Caco-2 (cell line): ENCODE measurements at regions of chr1 and their contacts with region 1.

Region 1: DNA sequence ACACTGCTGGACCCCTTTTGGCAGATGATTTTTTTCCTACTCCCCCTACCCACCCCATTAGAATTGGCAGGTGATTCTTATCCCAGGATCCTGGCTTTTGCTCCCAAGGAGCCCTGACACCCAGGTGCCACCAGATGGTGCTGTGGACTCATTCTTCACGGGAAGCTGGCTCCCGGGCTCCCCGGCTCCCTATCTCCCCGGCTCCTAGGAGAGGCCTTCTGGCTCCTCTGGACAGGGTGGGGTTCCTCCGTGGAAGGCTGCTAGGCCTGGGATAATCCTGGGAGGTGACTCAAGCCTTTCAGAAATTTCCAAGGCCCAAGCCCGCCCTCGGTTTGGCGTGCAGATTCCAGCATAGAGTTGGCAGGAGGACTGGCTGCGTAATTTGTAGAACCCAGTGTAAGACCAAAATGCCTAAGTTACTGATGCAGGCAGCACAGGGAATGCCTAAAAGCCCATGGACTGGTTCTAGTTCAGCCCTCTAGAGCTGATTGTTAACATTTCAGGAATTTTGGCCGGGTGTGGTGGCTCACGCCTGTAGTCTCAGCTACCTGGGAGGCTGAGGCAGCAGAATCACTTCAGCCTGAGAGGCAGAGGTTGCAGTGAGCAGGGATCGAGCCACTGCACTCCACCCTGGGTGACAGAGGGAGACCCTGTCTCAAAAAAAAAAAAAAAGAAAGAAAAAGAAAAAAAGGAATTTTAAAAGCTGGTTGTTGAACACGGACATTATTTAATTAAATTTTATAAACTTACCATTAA is 6.8 kb upstream of the BSDC1 start:
- DNase-seq: peak; percentile 78 to 80
- H3K4me3 ChIP-seq: no peak overlapping the region
- H3K4me3 Mint-ChIP-seq: no peak overlapping the region
- H3K27ac Mint-ChIP-seq: no peak overlapping the region
- H3K4me1 ChIP-seq: no peaks in the 10 kb centered on the region
- H3K4me1 Mint-ChIP-seq: no peaks in the 10 kb centered on the region
- H3K27me3 ChIP-seq: no peaks in the 10 kb centered on the region
- H3K27me3 Mint-ChIP-seq: no peaks in the 10 kb centered on the region
- CTCF ChIP-seq: peak; percentile 67 to 84

Region 2: GRCh38 chr1:32221980-32222755 is 178.9 kb before region 1 on chr1 and contains the starts of genes EIF3I and TMEM234:
- CTCF ChIA-PET with region 1: no interaction called
- POLR2A ChIA-PET with region 1: no interaction called
- intact Hi-C with region 1: no loop called
- DNase-seq: peak; percentile 84 to 88
- H3K4me3 ChIP-seq: peak within 1 kb of the TSS; percentile 73
- H3K4me3 Mint-ChIP-seq: peak within 1 kb of the TSS; percentile 89
- H3K27ac Mint-ChIP-seq: peak within 1 kb of the TSS; percentile 95
- H3K4me1 ChIP-seq: no peaks in the 10 kb centered on the region
- H3K4me1 Mint-ChIP-seq: no peaks in the 10 kb centered on the region
- H3K27me3 ChIP-seq: no peaks in the 10 kb centered on the region
- H3K27me3 Mint-ChIP-seq: no peaks in the 10 kb centered on the region
- CTCF ChIP-seq: no peak
- total RNA-seq, gene EIF3I: 128 and 153 TPM in 2 replicates
- total RNA-seq, gene TMEM234: 11.5 and 12.0 TPM in 2 replicates

Region 3: DNA sequence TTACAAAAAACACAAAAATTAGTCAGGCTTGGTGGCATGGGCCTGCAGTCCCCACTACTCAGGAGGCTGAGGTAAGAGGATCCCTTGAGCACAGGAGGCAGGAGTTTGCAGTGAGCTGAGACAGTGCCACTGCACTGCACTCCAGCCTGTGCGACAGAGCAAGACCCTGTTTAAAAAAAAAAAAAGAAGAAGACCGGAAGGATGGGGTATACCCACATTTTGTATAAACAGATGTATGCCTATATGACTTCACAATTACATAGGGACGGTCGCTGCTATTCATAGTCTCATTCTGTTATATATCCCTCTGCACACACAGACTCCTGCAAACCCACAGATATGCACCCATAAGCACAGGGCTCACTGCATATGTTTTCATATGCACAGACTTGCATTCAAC is 137.3 kb before region 1 on chr1:
- CTCF ChIA-PET with region 1: no interaction called
- POLR2A ChIA-PET with region 1: no interaction called
- intact Hi-C with region 1: no loop called
- DNase-seq: no peak
- H3K4me3 ChIP-seq: no peak overlapping the region
- H3K4me3 Mint-ChIP-seq: no peak overlapping the region
- H3K27ac Mint-ChIP-seq: no peak overlapping the region
- H3K4me1 ChIP-seq: peaks cover 4% of the 10 kb centered on the region; the same call in 1 of the 2 replicates
- H3K4me1 Mint-ChIP-seq: peaks cover 7% of the 10 kb centered on the region
- H3K27me3 ChIP-seq: no peaks in the 10 kb centered on the region
- H3K27me3 Mint-ChIP-seq: no peaks in the 10 kb centered on the region
- CTCF ChIP-seq: no peak

Region 4: GRCh38 chr1:32413507-32414185 is 12.6 kb after region 1 on chr1:
- CTCF ChIA-PET with region 1: interaction called, 3 read pairs
- POLR2A ChIA-PET with region 1: no interaction called
- intact Hi-C with region 1: loop called (anchors 1 kb)
- DNase-seq: peak; percentile 45 to 57
- H3K4me3 ChIP-seq: no peak overlapping the region
- H3K4me3 Mint-ChIP-seq: no peak overlapping the region
- H3K27ac Mint-ChIP-seq: no peak overlapping the region
- H3K4me1 ChIP-seq: no peaks in the 10 kb centered on the region
- H3K4me1 Mint-ChIP-seq: no peaks in the 10 kb centered on the region
- H3K27me3 ChIP-seq: no peaks in the 10 kb centered on the region
- H3K27me3 Mint-ChIP-seq: no peaks in the 10 kb centered on the region
- CTCF ChIP-seq: peak; percentile 32 to 41

Region 5: GRCh38 chr1:32448773-32449456 is 47.9 kb after region 1 on chr1:
- CTCF ChIA-PET with region 1: no interaction called
- POLR2A ChIA-PET with region 1: interaction called, 7 read pairs
- intact Hi-C with region 1: loop called (anchors 2 kb)
- DNase-seq: peak; percentile 38 to 51
- H3K4me3 ChIP-seq: no peak overlapping the region
- H3K4me3 Mint-ChIP-seq: no peak overlapping the region
- H3K27ac Mint-ChIP-seq: no peak overlapping the region
- H3K4me1 ChIP-seq: no peaks in the 10 kb centered on the region
- H3K4me1 Mint-ChIP-seq: peaks cover 5% of the 10 kb centered on the region
- H3K27me3 ChIP-seq: no peaks in the 10 kb centered on the region
- H3K27me3 Mint-ChIP-seq: peaks cover 5% of the 10 kb centered on the region
- CTCF ChIP-seq: no peak

Region 6: DNA sequence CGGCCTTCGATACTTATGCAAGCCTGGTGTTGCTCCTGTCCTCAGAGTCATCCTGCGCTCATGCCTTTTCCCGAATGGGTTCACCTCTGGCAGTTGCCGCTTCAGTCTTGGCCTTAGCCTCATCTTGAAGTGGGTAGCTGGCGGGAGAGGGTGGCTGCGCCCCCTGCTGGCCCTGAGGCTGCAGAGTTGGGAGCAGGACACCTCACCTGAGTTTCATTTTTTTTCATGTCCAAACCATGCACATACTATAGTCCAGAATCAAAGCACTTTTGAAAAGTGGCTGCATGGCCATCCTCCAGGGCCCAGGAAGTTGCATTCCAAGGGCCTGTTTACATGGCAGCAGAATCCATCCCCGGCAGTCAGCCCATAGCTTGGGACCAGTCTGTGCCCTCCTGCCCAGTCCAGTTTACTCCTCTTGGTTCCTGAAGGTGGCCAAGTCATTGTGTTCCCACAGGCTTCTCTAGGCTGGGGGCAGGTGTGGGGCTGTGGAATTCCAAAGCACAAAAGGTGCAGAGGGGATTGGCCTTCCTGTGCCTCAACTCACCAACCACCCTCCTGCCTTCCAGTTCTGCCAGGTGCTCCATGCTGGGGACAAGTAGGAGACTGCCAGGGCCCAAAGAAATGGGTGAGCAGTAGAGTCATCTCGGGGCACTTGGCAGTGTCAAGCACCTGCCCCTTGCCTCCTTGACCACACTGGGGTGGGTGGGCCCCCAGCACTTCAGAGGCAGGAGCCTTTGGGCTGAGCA is 372.1 kb after region 1 on chr1:
- CTCF ChIA-PET with region 1: no interaction called
- POLR2A ChIA-PET with region 1: no interaction called
- intact Hi-C with region 1: loop called (anchors 10 kb)
- DNase-seq: peak; percentile 82 to 86
- H3K4me3 ChIP-seq: no peak overlapping the region
- H3K4me3 Mint-ChIP-seq: peak overlapping the region; percentile 35
- H3K27ac Mint-ChIP-seq: peak overlapping the region; percentile 73
- H3K4me1 ChIP-seq: peaks cover 6% of the 10 kb centered on the region; the same call in 1 of the 2 replicates
- H3K4me1 Mint-ChIP-seq: peaks cover 16% of the 10 kb centered on the region
- H3K27me3 ChIP-seq: no peaks in the 10 kb centered on the region
- H3K27me3 Mint-ChIP-seq: no peaks in the 10 kb centered on the region
- CTCF ChIP-seq: peak; percentile 74 to 79